PC-9 (cell line): ENCODE measurements at regions of chr11 and their contacts with region 1.

Region 1: DNA sequence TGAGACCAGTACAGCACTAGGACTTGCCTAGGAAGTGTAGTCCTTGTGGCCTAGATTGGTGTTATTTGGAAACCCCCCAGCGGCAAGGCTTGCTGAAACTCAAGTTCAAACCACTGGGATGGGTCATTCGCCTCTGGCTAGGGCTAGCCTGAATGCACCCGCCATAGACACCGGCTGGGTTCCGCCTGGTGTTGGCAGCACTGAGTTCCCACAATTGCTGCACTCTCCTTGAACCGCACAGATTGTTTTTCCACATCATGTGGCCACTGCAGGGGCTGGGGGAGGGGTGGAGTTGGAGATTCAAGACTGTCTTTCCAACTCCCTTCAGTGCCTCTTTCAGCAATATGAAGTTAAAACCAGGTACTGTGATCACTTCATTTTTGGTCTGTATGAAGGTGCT is 43.1 kb downstream of the CCDC73 start:
- DNase-seq: no peak
- H3K4me3 ChIP-seq: no peak overlapping the region
- H3K27ac ChIP-seq: no peak overlapping the region
- H3K4me1 ChIP-seq: no peaks in the 10 kb centered on the region
- H3K27me3 ChIP-seq: no peaks in the 10 kb centered on the region
- CTCF ChIP-seq: no peak

Region 2: DNA sequence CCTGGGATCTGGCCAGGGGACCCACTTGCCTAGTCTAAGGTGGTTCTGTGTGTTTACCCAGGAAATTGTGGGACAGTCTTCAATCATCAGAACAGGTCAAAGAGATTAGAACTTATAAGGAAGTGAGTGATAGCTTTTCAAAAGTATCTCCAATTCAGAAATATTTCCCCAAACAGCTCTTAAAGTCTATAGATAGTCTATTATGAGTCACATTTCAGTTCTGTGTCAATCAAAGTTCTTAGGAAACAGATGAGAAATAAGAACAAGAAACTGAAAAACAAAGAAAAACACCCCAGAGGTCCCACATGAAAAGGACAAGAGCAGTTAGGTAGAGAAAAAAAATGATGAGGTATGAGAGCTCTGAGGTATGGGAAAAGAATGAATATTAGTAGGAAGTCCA is 1783.8 kb before region 1 on chr11:
- CTCF ChIA-PET with region 1: interaction called, 11 read pairs
- POLR2A ChIA-PET with region 1: no interaction called
- intact Hi-C with region 1: no loop called
- DNase-seq: no peak
- H3K4me3 ChIP-seq: no peak overlapping the region
- H3K27ac ChIP-seq: no peak overlapping the region
- H3K4me1 ChIP-seq: no peaks in the 10 kb centered on the region
- H3K27me3 ChIP-seq: no peaks in the 10 kb centered on the region
- CTCF ChIP-seq: no peak

Region 3: DNA sequence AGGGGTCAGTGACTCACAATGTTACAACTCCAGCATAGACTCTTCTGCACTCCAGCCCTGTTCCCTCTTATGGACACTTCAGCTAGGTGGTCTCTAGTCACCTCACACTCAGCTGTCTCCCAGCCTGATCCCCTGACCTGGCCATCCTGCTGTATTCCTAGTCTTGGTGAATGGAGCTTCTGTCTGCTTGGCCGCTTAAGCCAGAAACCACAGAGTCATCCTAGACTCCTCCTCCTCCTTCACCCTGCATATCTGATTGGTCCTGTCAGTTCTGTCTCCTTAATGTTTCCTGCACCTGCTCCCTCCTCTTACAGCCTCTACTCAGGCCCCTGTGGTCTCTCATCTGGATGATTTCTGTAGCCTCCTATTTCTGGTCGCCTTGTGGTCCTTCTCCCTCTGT is 650.7 kb after region 1 on chr11:
- CTCF ChIA-PET with region 1: no interaction called
- POLR2A ChIA-PET with region 1: no interaction called
- intact Hi-C with region 1: no loop called
- DNase-seq: no peak
- H3K4me3 ChIP-seq: no peak overlapping the region
- H3K27ac ChIP-seq: no peak overlapping the region
- H3K4me1 ChIP-seq: no peaks in the 10 kb centered on the region
- H3K27me3 ChIP-seq: no peaks in the 10 kb centered on the region
- CTCF ChIP-seq: no peak